Endothelial cell of umbilical vein (primary cell): ENCODE measurements at regions of chr7 and their contacts with region 1.

Region 1: DNA sequence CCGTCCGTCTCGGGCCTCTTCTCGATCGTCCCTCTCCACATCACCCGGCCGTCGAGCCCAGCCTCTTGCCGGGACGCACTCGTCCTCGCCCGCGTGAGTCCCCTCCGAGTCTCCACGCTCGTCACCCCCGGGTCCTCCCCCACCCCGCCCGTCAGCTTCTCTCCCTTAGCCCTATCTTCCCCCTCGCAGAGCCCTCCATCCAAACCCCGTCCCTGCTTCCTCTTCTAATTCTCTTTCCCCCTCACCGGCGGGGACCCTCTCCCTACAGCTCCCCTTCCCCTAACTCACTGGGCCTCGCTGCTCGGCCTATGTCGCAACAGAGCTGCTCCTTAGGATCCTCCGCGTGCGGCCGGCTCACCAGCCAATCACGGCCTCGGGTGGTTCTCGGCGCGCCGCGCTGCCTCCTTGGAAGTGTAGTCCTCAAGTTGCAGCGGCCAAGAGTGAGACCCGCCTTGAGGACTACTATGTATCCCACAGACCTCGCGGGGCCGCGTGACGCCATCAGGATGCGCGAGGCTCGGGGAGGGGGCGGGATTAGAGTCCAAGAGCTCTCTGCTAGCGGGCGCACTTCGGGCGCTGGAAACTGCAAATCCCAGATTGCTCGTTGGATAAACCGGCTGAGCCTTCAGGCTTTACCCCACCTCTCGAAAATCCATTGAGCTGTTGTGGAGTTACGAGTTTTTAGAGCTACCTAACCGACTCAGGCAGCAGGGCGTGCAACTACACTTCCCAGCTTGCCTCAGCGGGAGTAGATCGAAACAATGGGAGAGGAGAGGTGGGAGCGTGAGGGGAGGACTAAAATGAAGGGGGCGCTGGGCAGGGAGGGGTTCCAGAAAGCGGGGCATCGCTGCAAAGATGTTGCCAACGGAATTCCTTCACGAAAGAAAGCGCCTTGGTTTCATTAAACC is at the start of gene ABCF2:
- DNase-seq: peak; percentile 99
- H3K4me3 ChIP-seq: peak within 1 kb of the TSS; percentile 64 to 98 (median 82)
- H3K27ac ChIP-seq: peak within 1 kb of the TSS; percentile 16
- H3K4me1 ChIP-seq: peaks cover 22% of the 10 kb centered on the region
- H3K27me3 ChIP-seq: no peaks in the 10 kb centered on the region
- CTCF ChIP-seq: no peak
- POLR2A ChIP-seq: peak; percentile 1
- total RNA-seq, gene ABCF2: 56.7 and 61.6 TPM in 2 replicates

Region 2: DNA sequence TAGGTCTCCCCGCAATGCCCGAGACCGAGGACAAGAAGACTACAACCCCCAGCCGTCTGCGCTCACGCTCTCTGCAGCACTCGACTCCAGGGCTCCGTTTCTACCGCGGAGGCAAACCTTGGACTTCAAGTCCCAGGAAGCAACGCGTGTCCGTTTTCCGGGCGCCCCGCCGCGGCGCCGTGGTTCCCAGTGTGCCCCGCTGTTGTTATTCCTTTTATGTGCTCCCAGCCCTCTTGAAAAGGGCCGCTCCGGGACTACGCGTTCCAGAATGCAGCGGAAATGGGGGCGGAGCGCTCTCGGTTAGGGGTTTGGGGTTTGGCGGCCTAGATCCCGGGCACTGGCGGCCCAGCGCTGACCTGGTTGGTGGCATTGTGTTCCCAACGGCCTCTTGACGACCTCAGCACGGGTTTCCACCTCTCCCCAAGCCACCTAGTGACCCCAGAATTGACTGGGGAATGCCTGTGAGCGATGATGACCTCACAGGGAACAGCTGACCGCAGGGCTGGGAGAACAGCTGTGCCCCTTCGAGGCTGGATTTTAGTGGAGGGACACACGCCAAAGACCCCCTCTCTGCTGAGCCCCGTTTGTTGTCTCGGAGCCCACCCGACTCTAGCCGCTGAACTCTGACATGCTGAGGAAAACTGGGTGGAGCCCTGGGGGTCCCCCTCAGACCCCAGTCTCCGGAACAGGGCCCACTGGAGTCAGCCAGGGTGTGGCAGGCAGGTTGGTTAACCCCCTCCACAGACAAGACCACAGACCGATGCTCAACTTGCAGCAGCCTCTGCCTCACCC is 168.9 kb before region 1 on chr7:
- CTCF ChIA-PET with region 1: no interaction called
- POLR2A ChIA-PET with region 1: no interaction called
- dilution Hi-C with region 1: no loop called
- intact Hi-C with region 1: no loop called
- DNase-seq: peak; percentile 100
- H3K4me3 ChIP-seq: peak overlapping the region in 2 of 3 experiments; percentile 11 to 69
- H3K27ac ChIP-seq: peak overlapping the region; percentile 81
- H3K4me1 ChIP-seq: peaks cover 29% of the 10 kb centered on the region
- H3K27me3 ChIP-seq: no peaks in the 10 kb centered on the region
- CTCF ChIP-seq: no peak
- POLR2A ChIP-seq: peak; percentile 52

Region 3: DNA sequence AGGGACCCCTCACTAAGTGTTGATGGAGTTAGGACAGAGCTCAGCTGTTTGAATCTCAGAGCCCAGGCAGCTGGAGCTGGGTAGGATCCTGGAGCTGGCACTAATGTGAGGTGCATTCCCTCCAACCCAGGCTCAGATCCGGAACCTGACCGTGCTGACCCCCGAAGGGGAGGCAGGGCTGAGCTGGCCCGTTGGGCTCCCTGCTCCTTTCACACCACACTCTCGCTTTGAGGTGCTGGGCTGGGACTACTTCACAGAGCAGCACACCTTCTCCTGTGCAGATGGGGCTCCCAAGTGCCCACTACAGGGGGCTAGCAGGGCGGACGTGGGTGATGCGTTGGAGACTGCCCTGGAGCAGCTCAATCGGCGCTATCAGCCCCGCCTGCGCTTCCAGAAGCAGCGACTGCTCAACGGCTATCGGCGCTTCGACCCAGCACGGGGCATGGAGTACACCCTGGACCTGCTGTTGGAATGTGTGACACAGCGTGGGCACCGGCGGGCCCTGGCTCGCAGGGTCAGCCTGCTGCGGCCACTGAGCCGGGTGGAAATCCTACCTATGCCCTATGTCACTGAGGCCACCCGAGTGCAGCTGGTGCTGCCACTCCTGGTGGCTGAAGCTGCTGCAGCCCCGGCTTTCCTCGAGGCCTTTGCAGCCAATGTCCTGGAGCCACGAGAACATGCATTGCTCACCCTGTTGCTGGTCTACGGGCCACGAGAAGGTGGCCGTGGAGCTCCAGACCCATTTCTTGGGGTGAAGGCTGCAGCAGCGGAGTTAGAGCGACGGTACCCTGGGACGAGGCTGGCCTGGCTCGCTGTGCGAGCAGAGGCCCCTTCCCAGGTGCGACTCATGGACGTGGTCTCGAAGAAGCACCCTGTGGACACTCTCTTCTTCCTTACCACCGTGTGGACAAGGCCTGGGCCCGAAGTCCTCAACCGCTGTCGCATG is 10.4 kb after region 1 on chr7:
- CTCF ChIA-PET with region 1: interaction called, 58 read pairs
- POLR2A ChIA-PET with region 1: no interaction called
- dilution Hi-C with region 1: no loop called
- intact Hi-C with region 1: no loop called
- DNase-seq: no peak
- H3K4me3 ChIP-seq: no peak overlapping the region
- H3K27ac ChIP-seq: no peak overlapping the region
- H3K4me1 ChIP-seq: peaks cover 8% of the 10 kb centered on the region
- H3K27me3 ChIP-seq: no peaks in the 10 kb centered on the region
- CTCF ChIP-seq: no peak
- POLR2A ChIP-seq: no peak

Region 4: DNA sequence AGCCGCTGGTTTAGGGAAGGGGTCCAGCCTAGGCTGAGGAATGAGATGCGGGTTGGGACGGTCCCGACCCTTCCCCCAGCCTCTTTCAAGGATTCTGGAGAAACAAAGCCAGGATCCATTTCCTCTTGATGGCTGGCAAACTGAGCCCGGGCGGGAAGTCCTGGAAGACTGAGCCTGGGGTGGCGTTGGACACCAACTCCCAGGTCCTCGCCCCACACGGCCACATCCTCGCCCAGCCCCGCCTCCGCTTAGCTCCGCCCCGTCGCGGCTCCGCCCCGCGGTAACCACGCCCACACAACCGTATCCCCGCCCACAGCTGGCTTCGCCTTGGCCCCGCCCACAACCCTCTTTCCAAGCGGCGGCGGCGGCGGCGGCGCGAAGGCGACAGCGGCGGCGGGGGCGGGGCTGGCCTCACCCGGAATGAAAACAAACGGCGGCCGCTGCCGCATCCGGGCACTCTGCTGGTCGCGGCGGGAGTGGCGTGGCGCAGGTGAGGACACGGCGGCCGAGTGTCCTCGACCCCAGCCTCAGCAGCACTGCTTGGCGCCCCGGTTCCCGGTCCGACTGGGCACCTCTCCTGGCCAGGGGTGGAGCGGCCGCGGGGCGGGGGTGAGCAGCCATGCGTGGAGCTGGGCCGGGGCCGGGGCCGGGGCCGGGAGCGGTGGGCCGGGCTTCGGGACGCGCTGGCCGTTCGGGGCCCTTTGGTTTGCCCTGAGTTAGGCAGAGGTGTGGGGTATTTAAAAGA is 114.4 kb after region 1 on chr7 and contains the start of gene NUB1:
- CTCF ChIA-PET with region 1: no interaction called
- POLR2A ChIA-PET with region 1: interaction called, 3 read pairs
- dilution Hi-C with region 1: no loop called
- intact Hi-C with region 1: loop called (anchors 1 kb)
- DNase-seq: peak; percentile 90
- H3K4me3 ChIP-seq: peak within 1 kb of the TSS; percentile 97 to 100 (median 100)
- H3K27ac ChIP-seq: peak within 1 kb of the TSS; percentile 53
- H3K4me1 ChIP-seq: peaks cover 15% of the 10 kb centered on the region
- H3K27me3 ChIP-seq: peaks cover 8 to 14% of the 10 kb centered on the region in 2 experiments
- CTCF ChIP-seq: no peak
- POLR2A ChIP-seq: no peak
- total RNA-seq, gene NUB1: 41.4 and 46.2 TPM in 2 replicates